ENCODE measurements at regions of chr11 and their contacts with region 1.

Region 1: GRCh38 chr11:108340970-108341369 is 118.1 kb downstream of the ATM start:
- DNase-seq: no peak
- ATAC-seq: no peak
- H3K4me3 ChIP-seq: no peak overlapping the region
- H3K4me3 Mint-ChIP-seq: no peak overlapping the region
- H3K27ac ChIP-seq: no peak overlapping the region
- H3K27ac Mint-ChIP-seq: peak overlapping the region in 5 of 9 donors; percentile 1 to 59 (median 22)
- H3K4me1 ChIP-seq: no peaks in the 10 kb centered on the region
- H3K4me1 Mint-ChIP-seq: peaks cover 9 to 48% (median 29%) of the 10 kb centered on the region in 7 donors
- H3K27me3 ChIP-seq: no peaks in the 10 kb centered on the region
- H3K27me3 Mint-ChIP-seq: no peaks in the 10 kb centered on the region

Region 2: DNA sequence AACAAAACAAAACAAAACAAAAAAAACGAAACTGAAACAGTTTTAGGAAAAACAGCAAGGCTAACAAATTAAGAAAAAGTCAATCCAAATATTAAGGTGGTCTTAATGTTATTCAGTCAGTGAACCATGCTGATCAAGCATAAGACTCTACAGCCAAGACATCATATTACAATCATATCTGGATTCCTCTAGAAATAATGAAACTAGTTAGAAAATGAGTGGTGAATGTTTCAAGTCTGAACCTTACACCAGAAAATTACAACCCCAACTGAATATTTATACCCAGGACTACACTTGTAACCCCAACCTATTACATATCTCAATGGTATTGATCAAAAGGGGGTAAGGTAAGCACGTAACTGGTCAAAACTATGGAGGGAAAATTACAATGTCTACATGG is 170.8 kb before region 1 on chr11:
- CTCF ChIA-PET with region 1: no interaction called
- POLR2A ChIA-PET with region 1: no interaction called
- intact Hi-C with region 1: loop called in 1 of 2 experiments (anchors 5 kb)
- DNase-seq: no peak
- ATAC-seq: no peak
- H3K4me3 ChIP-seq: no peak overlapping the region
- H3K4me3 Mint-ChIP-seq: peak overlapping the region in 1 of 10 donors; percentile 3
- H3K27ac ChIP-seq: no peak overlapping the region
- H3K27ac Mint-ChIP-seq: peak overlapping the region; percentile 50 to 92 (median 76)
- H3K4me1 ChIP-seq: no peaks in the 10 kb centered on the region
- H3K4me1 Mint-ChIP-seq: peaks cover 16 to 47% (median 25%) of the 10 kb centered on the region in 7 donors
- H3K27me3 ChIP-seq: no peaks in the 10 kb centered on the region
- H3K27me3 Mint-ChIP-seq: no peaks in the 10 kb centered on the region

Region 3: DNA sequence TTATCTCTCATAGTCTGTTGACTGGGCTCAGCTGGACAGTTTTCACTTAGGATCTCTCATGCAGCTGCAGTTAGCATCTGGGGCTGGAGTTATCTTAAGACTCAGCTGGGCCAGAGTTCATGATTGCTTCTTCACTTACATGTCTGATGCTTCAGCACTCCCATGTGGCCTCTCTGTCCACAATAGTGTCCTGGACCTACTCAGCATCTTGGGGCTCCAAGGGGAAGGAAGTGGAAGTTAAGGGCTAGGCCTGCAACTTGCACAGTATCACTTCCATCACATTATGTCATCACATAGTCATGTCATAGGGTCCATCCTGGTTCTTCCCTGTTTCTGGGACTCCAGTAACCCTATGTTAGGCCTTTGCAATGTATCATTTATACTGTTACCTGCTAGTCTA is 10.5 kb after region 1 on chr11:
- CTCF ChIA-PET with region 1: no interaction called
- POLR2A ChIA-PET with region 1: no interaction called
- intact Hi-C with region 1: loop called in 1 of 2 experiments (anchors 2 kb)
- DNase-seq: no peak
- ATAC-seq: no peak
- H3K4me3 ChIP-seq: no peak overlapping the region
- H3K4me3 Mint-ChIP-seq: no peak overlapping the region
- H3K27ac ChIP-seq: no peak overlapping the region
- H3K27ac Mint-ChIP-seq: peak overlapping the region in 5 of 9 donors; percentile 17 to 79 (median 56)
- H3K4me1 ChIP-seq: no peaks in the 10 kb centered on the region
- H3K4me1 Mint-ChIP-seq: peaks cover 0 to 11% (median 5%) of the 10 kb centered on the region in 7 donors
- H3K27me3 ChIP-seq: no peaks in the 10 kb centered on the region
- H3K27me3 Mint-ChIP-seq: no peaks in the 10 kb centered on the region

Region 4: GRCh38 chr11:108393046-108393445 is 52.1 kb after region 1 on chr11:
- CTCF ChIA-PET with region 1: no interaction called
- POLR2A ChIA-PET with region 1: no interaction called
- intact Hi-C with region 1: no loop called
- DNase-seq: no peak
- ATAC-seq: no peak
- H3K4me3 ChIP-seq: no peak overlapping the region
- H3K4me3 Mint-ChIP-seq: no peak overlapping the region
- H3K27ac ChIP-seq: no peak overlapping the region
- H3K27ac Mint-ChIP-seq: no peak overlapping the region
- H3K4me1 ChIP-seq: no peaks in the 10 kb centered on the region
- H3K4me1 Mint-ChIP-seq: no peaks in the 10 kb centered on the region
- H3K27me3 ChIP-seq: no peaks in the 10 kb centered on the region
- H3K27me3 Mint-ChIP-seq: no peaks in the 10 kb centered on the region

Region 5: GRCh38 chr11:108453207-108453835 is 112.4 kb after region 1 on chr11:
- CTCF ChIA-PET with region 1: no interaction called
- POLR2A ChIA-PET with region 1: no interaction called
- intact Hi-C with region 1: no loop called
- DNase-seq: no peak
- ATAC-seq: no peak
- H3K4me3 ChIP-seq: no peak overlapping the region
- H3K4me3 Mint-ChIP-seq: no peak overlapping the region
- H3K27ac ChIP-seq: no peak overlapping the region
- H3K27ac Mint-ChIP-seq: no peak overlapping the region
- H3K4me1 ChIP-seq: no peaks in the 10 kb centered on the region
- H3K4me1 Mint-ChIP-seq: peaks cover 0 to 2% (median 0%) of the 10 kb centered on the region in 7 donors
- H3K27me3 ChIP-seq: no peaks in the 10 kb centered on the region
- H3K27me3 Mint-ChIP-seq: peaks cover 0 to 7% (median 0%) of the 10 kb centered on the region in 5 donors

Region 6: DNA sequence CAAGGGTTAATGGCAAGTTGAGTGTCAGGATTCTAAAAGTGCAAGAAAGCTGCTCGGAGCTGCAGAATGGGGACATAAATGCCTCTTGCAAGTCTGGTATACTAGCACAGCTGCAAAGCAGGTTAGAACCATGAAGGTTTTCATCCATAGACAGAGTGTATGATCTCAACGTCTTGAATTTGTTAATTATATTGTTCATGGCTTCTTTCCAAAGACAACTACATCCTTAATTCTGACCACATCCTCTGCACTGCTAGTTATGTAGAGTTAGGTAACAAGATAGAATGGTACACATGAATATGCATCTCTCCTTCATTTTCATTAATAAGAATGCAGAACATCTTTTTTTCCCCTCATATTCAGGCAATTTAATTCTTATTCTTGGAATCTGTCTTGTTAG is 218.4 kb after region 1 on chr11:
- CTCF ChIA-PET with region 1: no interaction called
- POLR2A ChIA-PET with region 1: no interaction called
- intact Hi-C with region 1: no loop called
- DNase-seq: peak in 6 of 9 donors; percentile 21 to 48 (median 44)
- ATAC-seq: peak; percentile 65
- H3K4me3 ChIP-seq: no peak overlapping the region
- H3K4me3 Mint-ChIP-seq: peak overlapping the region in 7 of 10 donors; percentile 30 to 53 (median 49)
- H3K27ac ChIP-seq: no peak overlapping the region
- H3K27ac Mint-ChIP-seq: peak overlapping the region in 3 of 9 donors; percentile 6 to 43 (median 20)
- H3K4me1 ChIP-seq: peaks cover 0 to 18% of the 10 kb centered on the region in 2 donors
- H3K4me1 Mint-ChIP-seq: peaks cover 13 to 26% (median 24%) of the 10 kb centered on the region in 7 donors
- H3K27me3 ChIP-seq: no peaks in the 10 kb centered on the region
- H3K27me3 Mint-ChIP-seq: no peaks in the 10 kb centered on the region

Measured in naive thymus-derived CD4-positive, alpha-beta T cell (primary cell).